ENCODE measurements at regions of chr10 and their contacts with region 1.

Region 1: GRCh38 chr10:22573820-22574569 is 140.4 kb downstream of the PIP4K2A start:
- DNase-seq: no peak
- H3K4me3 Mint-ChIP-seq: no peak overlapping the region
- H3K27ac Mint-ChIP-seq: peak overlapping the region; percentile 22
- H3K4me1 Mint-ChIP-seq: peaks cover 33% of the 10 kb centered on the region
- H3K27me3 Mint-ChIP-seq: no peaks in the 10 kb centered on the region

Region 2: DNA sequence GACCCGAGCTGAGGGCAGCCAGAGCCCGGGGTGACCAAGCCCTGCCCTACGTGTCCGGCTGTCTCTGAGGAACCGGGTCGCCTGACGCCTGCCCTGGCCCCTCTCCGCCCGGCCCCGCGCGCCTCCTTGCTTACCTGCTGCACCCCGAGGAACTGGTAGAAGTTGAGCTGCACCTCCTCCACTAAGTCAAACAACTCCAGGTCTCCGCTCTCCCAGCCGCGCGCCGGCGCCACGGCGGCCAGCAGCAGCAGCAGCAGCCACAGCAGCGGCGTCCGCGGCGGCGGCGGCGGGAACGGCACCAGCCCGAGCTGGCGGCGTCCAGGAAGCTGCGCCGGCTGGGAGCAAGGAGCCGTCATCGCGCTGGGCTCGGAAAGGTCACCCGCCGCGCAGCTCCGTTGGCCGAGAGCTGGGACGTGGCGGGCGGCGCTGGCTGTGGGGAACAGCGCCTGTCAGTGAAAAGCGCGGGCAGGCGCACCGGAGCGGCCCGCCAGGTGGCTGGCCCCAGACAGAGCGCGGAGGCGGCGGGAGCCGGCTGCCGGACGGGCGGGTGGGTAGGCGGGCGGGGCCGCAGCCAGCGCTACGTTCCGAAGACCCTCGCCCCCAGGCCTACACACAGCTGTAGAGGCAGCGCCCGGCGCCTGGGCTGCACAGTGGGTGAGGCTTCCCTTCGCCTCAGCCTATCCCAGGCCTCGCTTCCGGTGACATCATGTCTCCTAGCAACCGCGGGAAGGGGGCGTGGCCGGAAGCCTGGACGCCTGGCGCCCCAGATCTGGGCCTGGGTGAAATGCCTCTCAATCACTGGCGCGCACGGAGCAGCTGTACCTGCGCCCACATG is 570.7 kb before region 1 on chr10 and contains the start of gene DNAJC1:
- intact Hi-C with region 1: loop called (anchors 2 kb)
- DNase-seq: peak; percentile 96
- H3K4me3 Mint-ChIP-seq: peak within 1 kb of the TSS; percentile 96
- H3K27ac Mint-ChIP-seq: peak within 1 kb of the TSS; percentile 91
- H3K4me1 Mint-ChIP-seq: peaks cover 34% of the 10 kb centered on the region
- H3K27me3 Mint-ChIP-seq: peaks cover 12% of the 10 kb centered on the region
- total RNA-seq, gene DNAJC1: 24.0 and 24.5 TPM in 2 replicates

Region 3: DNA sequence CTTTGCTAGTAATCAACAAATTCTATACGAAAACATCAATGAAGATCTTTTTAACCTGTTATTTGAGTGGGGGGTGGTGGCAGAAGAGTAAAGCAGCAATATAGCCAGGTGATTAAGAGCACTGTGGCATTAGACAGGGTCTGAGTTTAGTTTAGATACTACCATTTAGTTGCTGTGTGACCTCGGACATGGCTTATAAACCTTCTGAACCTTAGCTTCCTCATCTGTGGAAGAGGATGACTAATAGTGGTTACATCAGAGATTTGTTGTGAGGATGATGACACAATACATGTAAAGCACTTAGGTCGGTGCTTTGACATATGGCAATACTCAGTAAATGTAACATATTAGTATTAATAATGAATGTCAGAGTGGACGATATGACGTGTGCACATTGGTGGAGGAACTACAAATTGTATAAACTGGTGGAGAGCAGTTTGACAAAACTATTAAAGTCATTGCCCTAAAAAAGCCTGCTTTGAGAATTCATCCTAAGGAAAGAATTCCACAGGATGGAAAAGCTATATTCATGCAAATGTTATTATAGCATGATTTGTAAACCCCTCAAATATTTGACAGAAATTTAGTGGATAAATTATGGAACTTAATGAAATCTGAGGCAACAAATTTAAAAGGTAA is 204.4 kb before region 1 on chr10:
- intact Hi-C with region 1: loop called (anchors 5 kb)
- DNase-seq: no peak
- H3K4me3 Mint-ChIP-seq: no peak overlapping the region
- H3K27ac Mint-ChIP-seq: no peak overlapping the region
- H3K4me1 Mint-ChIP-seq: peaks cover 42% of the 10 kb centered on the region
- H3K27me3 Mint-ChIP-seq: no peaks in the 10 kb centered on the region

Region 4: GRCh38 chr10:22615819-22616499 is 42.0 kb after region 1 on chr10:
- intact Hi-C with region 1: no loop called
- DNase-seq: no peak
- H3K4me3 Mint-ChIP-seq: peak overlapping the region; percentile 23
- H3K27ac Mint-ChIP-seq: peak overlapping the region; percentile 45
- H3K4me1 Mint-ChIP-seq: peaks cover 83% of the 10 kb centered on the region
- H3K27me3 Mint-ChIP-seq: no peaks in the 10 kb centered on the region

Region 5: DNA sequence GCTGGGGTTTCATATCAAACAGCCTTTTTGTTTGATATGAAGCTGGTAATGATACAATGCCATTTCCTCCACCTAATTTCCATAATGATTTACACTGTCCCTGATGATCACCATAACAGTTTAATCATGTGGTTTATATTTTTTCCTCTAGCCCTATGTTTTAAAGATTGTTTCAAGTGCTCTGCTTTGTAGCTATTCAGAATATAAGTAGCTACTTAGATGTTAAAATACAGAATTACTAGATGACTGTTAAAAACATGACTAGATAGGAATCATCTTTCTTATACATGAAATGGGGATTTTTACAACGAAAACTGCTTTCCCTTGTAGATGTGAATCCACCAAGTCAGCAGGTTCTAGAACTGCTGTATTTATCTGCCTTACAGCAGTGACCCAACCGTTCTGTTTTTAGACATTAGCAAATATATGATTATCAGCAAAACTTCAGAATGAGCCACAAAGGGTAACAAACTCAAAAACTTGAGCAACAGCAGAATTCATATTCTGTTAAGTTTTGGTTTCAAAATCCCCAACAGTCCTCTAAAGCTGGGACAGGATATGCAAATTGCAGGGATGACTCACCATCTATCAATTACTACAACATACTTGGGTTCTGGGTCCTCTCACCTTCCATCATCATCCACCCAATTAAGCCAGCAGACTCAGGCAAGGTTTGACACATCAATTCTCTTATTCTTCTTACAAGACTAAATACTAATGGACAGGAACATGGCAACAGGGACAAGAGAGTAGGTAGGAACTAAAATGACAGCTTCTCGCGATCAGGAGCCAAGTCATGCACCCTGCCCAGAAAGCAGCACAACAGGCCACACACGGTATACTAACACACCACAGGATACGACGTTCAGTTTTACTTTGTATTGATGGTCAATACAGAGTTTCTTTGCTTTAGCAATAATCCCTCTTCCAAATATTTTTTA is 56.5 kb after region 1 on chr10:
- intact Hi-C with region 1: loop called (anchors 2 kb)
- DNase-seq: peak; percentile 41
- H3K4me3 Mint-ChIP-seq: peak overlapping the region; percentile 70
- H3K27ac Mint-ChIP-seq: peak overlapping the region; percentile 95
- H3K4me1 Mint-ChIP-seq: peaks cover 87% of the 10 kb centered on the region
- H3K27me3 Mint-ChIP-seq: no peaks in the 10 kb centered on the region

Region 6: DNA sequence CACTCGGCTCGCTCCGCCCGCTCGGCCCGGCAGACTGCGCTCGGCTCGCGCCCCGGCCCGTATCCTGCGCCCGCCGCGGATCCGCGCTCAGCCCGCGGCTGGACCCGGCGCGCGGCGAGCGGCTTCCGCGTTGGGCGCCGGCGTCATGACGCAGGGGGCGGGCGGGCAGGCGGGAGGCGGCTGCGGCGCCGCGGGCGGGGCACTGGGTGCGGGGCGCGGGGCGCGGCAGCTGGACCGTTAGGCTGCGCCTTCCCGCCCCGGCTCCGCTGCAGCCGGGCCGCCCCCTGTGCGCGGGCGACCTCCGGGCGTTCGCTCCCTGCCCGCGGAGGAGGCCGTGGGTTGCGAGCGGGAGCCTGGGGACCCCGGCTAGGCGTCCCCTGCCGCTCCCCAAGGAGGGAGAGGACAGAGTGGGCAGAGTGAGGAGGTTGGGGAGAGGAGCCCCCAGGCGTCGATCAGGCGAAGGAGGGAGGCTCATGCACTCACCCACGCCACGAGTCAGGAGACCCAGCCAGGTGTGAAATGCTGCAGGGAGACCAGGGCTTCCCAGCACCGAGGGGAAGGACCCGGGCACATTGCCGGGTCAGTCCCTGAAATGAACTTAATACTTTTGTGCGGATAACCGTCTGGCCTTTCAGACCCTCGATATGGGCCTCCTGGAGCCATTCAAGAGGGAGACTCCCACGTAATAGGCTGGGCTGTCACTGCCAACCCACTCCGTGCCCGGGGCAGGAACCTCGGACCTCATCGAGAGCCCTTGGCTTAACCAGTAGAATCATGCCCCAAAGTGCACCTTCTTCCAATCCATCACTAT is 140.7 kb after region 1 on chr10 and contains the start of gene PIP4K2A:
- intact Hi-C with region 1: loop called (anchors 5 kb)
- DNase-seq: peak; percentile 70
- H3K4me3 Mint-ChIP-seq: peak within 1 kb of the TSS; percentile 85
- H3K27ac Mint-ChIP-seq: peak within 1 kb of the TSS; percentile 58
- H3K4me1 Mint-ChIP-seq: peaks cover 33% of the 10 kb centered on the region
- H3K27me3 Mint-ChIP-seq: peaks cover 6% of the 10 kb centered on the region
- total RNA-seq, gene PIP4K2A: 104 and 105 TPM in 2 replicates

Region 7: GRCh38 chr10:23067939-23068775 is 494.2 kb after region 1 on chr10:
- intact Hi-C with region 1: loop called (anchors 10 kb)
- DNase-seq: peak; percentile 24
- H3K4me3 Mint-ChIP-seq: no peak overlapping the region
- H3K27ac Mint-ChIP-seq: no peak overlapping the region
- H3K4me1 Mint-ChIP-seq: peaks cover 2% of the 10 kb centered on the region
- H3K27me3 Mint-ChIP-seq: peaks cover 3% of the 10 kb centered on the region